Activated CD8-positive, alpha-beta T cell treated with anti-CD3 and anti-CD28 coated beads, Interleukin-2, amount 10 ng/mL, durations not matched to agents 7 days and 5 days (primary cell): ENCODE measurements at regions of chr5 and their contacts with region 1.

Region 1: DNA sequence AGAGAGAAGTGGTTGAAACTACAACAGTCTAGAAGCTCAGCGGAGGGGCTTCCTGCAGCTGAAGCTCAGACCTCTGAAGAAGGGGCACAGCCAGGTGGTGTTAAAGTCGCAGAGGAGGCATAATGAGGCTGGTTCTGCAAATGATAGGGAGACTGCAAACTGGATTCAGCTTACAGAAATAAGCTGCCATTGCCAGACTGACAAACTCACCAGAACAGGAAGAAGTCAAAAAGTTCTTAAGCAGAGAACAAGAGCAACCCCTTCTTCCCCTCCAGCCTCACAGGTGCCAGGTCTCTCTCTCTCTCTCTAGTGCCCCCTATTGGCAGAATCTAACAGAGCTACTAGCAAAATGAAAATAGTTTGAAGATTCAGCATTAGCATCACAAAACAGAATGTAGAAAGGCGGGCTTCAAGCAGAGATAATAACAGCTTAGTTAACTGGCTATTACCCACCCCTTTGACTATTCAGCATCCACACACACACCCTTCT is 76.7 kb downstream of the GRAMD2B start:
- DNase-seq: peak; percentile 56
- ATAC-seq: peak; percentile 76
- H3K4me3 Mint-ChIP-seq: no peak overlapping the region
- H3K27ac Mint-ChIP-seq: no peak overlapping the region
- H3K4me1 Mint-ChIP-seq: peaks cover 5% of the 10 kb centered on the region
- H3K27me3 Mint-ChIP-seq: no peaks in the 10 kb centered on the region

Region 2: GRCh38 chr5:126339215-126339805 is 160.6 kb before region 1 on chr5:
- CTCF ChIA-PET with region 1: interaction called, 30 read pairs
- POLR2A ChIA-PET with region 1: no interaction called
- DNase-seq: peak; percentile 73
- ATAC-seq: no peak
- H3K4me3 Mint-ChIP-seq: no peak overlapping the region
- H3K27ac Mint-ChIP-seq: no peak overlapping the region
- H3K4me1 Mint-ChIP-seq: no peaks in the 10 kb centered on the region
- H3K27me3 Mint-ChIP-seq: peaks cover 12% of the 10 kb centered on the region

Region 3: GRCh38 chr5:126422989-126423788 is 76.7 kb before region 1 on chr5 and contains the start of gene GRAMD2B:
- CTCF ChIA-PET with region 1: interaction called, 16 read pairs
- POLR2A ChIA-PET with region 1: interaction called, 3 read pairs
- DNase-seq: peak; percentile 79
- ATAC-seq: peak; percentile 88
- H3K4me3 Mint-ChIP-seq: peak within 1 kb of the TSS; percentile 84
- H3K27ac Mint-ChIP-seq: peak within 1 kb of the TSS; percentile 89
- H3K4me1 Mint-ChIP-seq: peaks cover 26% of the 10 kb centered on the region
- H3K27me3 Mint-ChIP-seq: no peaks in the 10 kb centered on the region
- total RNA-seq, gene GRAMD2B: 3.3 to 6.5 TPM

Region 4: DNA sequence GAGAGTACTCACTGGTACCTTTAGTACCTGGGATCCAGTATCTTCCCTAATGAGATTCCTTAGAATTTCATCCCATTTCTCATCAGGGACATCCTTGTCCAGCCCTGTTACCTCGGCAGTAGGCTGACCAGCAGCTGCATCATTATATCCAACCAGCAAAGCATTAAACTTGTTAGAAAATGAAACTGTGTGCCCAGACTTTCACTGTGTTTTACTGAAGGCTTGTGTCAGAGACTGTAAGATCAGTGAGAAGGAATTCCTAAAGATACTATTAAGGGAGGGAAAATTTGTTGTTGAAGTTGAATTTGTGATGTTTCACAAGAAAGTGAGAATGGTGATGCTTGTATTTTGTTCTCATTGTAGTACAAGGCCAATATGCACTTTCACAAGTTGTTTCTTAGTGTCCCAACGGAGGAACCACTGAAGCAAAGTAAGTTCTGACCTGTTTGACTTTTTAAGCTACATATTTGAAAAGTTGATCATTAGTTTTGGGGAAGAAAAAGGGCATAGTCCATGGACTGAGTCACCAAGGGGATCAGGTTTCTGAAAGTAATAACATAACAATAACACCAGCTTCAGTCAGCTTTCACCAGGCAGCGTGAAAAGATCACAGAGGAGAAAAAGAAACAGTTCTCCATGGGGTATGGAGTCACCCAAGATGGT is 27.9 kb before region 1 on chr5:
- CTCF ChIA-PET with region 1: interaction called, 17 read pairs
- POLR2A ChIA-PET with region 1: no interaction called
- DNase-seq: no peak
- ATAC-seq: no peak
- H3K4me3 Mint-ChIP-seq: no peak overlapping the region
- H3K27ac Mint-ChIP-seq: no peak overlapping the region
- H3K4me1 Mint-ChIP-seq: no peaks in the 10 kb centered on the region
- H3K27me3 Mint-ChIP-seq: no peaks in the 10 kb centered on the region

Region 5: DNA sequence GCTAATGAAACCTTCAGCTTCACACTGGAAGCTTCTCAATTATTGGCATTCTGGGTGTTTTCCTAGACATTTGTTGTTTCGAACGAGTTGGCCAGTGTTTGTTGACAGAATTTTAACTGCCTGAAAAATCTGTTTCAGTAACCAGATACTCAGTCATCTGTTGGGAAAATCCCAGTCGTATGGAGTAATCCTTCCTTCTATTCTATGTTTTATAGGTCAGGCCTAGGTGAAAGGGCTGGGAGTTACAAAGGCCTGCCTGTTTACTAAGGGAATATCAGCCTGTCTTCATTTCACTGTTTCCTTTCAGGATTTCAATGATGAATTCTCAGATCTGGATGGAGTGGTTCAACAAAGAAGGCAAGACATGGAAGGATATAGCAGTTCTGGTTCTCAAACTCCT is 16.7 kb before region 1 on chr5:
- CTCF ChIA-PET with region 1: interaction called, 35 read pairs
- POLR2A ChIA-PET with region 1: no interaction called
- DNase-seq: no peak
- ATAC-seq: no peak
- H3K4me3 Mint-ChIP-seq: no peak overlapping the region
- H3K27ac Mint-ChIP-seq: no peak overlapping the region
- H3K4me1 Mint-ChIP-seq: no peaks in the 10 kb centered on the region
- H3K27me3 Mint-ChIP-seq: no peaks in the 10 kb centered on the region

Region 6: GRCh38 chr5:126531543-126532120 is 31.7 kb after region 1 on chr5:
- CTCF ChIA-PET with region 1: interaction called, 18 read pairs
- POLR2A ChIA-PET with region 1: no interaction called
- DNase-seq: no peak
- ATAC-seq: no peak
- H3K4me3 Mint-ChIP-seq: no peak overlapping the region
- H3K27ac Mint-ChIP-seq: no peak overlapping the region
- H3K4me1 Mint-ChIP-seq: no peaks in the 10 kb centered on the region
- H3K27me3 Mint-ChIP-seq: peaks cover under 1% of the 10 kb centered on the region

Region 7: DNA sequence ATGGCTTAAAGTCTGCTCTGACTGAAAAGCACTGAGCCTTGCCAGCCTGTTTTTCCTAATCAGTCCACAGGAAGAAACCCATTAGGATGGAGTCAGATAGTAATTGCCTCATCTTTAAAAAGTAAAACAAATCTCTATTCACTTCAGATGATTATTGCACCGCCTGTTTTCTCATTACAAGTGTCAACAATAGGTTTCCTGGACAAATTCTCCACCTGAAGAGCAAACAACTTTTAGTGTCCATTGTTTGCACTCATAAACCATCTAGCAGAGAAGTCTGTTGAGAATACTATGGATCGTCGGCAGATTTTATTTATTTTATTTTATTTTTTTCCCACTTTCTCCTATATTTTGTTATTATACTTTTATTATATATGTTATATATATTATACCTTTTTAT is 553.2 kb after region 1 on chr5:
- CTCF ChIA-PET with region 1: no interaction called
- POLR2A ChIA-PET with region 1: no interaction called
- DNase-seq: no peak
- ATAC-seq: no peak
- H3K4me3 Mint-ChIP-seq: no peak overlapping the region
- H3K27ac Mint-ChIP-seq: no peak overlapping the region
- H3K4me1 Mint-ChIP-seq: no peaks in the 10 kb centered on the region
- H3K27me3 Mint-ChIP-seq: no peaks in the 10 kb centered on the region